Naive thymus-derived CD4-positive, alpha-beta T cell (primary cell): ENCODE measurements at regions of chr22 and their contacts with region 1.

Region 1: DNA sequence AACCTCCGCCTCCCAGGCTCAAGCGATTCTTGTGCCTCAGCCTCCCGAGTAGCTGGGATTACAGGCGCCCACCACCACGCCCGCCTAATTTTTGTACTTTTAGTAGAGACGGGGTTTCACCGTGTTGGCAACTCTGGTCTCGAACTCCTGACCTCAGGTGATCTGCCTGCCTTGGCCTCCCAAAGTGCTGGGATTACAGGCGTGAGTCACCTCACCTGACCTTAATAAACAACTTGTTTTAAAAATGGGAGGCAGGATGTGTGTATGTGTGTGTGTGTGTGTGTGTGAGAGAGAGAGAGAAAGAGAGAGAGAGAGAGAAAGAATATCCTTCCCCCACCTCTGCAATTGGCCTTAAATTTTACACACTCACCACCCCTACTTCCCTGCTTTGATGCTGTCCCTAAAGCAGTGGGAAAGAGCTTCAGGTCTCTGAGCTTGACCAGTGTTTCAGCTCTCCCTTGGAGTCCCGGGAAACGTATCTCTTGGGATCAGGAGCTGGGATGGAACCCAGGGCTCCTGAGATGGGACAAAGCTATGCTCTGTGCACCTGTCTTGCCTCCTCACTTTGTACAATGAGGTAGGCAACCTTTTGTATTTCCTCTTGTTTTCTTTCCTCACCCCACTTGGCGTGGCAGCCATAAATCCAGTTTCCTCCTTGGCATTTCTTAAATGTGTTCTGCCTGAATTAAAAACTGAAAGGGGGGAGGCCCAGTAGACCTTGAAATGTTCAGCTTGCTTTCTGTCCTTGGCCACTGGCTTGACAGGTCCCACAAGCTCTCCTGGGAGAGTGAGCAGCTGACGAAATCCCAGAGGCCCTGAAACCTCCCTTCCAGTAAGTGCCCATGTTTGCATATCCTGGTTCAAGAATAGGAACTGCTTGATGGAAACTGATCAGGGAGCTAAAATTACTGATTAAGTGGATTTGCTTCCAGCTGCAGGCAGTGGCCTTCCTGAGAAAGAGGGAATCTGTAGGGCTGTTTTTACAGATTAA is 17.8 kb upstream of the XBP1 start:
- DNase-seq: peak in 1 of 9 donors; percentile 22
- ATAC-seq: no peak
- H3K4me3 ChIP-seq: no peak overlapping the region
- H3K4me3 Mint-ChIP-seq: peak overlapping the region in 9 of 10 donors; percentile 25 to 76 (median 63)
- H3K27ac ChIP-seq: no peak overlapping the region
- H3K27ac Mint-ChIP-seq: peak overlapping the region; percentile 32 to 92 (median 75)
- H3K4me1 ChIP-seq: peaks cover 24 to 62% of the 10 kb centered on the region in 2 donors
- H3K4me1 Mint-ChIP-seq: peaks cover 59 to 92% (median 82%) of the 10 kb centered on the region in 7 donors
- H3K27me3 ChIP-seq: no peaks in the 10 kb centered on the region
- H3K27me3 Mint-ChIP-seq: no peaks in the 10 kb centered on the region

Region 2: GRCh38 chr22:28344918-28345703 is 473.1 kb before region 1 on chr22:
- CTCF ChIA-PET with region 1: no interaction called
- POLR2A ChIA-PET with region 1: no interaction called
- intact Hi-C with region 1: no loop called
- DNase-seq: no peak
- ATAC-seq: no peak
- H3K4me3 ChIP-seq: no peak overlapping the region
- H3K4me3 Mint-ChIP-seq: no peak overlapping the region
- H3K27ac ChIP-seq: no peak overlapping the region
- H3K27ac Mint-ChIP-seq: no peak overlapping the region
- H3K4me1 ChIP-seq: no peaks in the 10 kb centered on the region
- H3K4me1 Mint-ChIP-seq: peaks cover 0 to 10% (median 4%) of the 10 kb centered on the region in 7 donors
- H3K27me3 ChIP-seq: no peaks in the 10 kb centered on the region
- H3K27me3 Mint-ChIP-seq: peaks cover 0 to 13% (median 3%) of the 10 kb centered on the region in 5 donors

Region 3: GRCh38 chr22:28791841-28792490 is 26.2 kb before region 1 on chr22:
- CTCF ChIA-PET with region 1: interaction called, 9 read pairs
- POLR2A ChIA-PET with region 1: interaction called, 194 read pairs
- intact Hi-C with region 1: no loop called
- DNase-seq: no peak
- ATAC-seq: peak; percentile 23
- H3K4me3 ChIP-seq: no peak overlapping the region
- H3K4me3 Mint-ChIP-seq: peak overlapping the region in 5 of 10 donors; percentile 10 to 40 (median 34)
- H3K27ac ChIP-seq: no peak overlapping the region
- H3K27ac Mint-ChIP-seq: peak overlapping the region; percentile 12 to 97 (median 63)
- H3K4me1 ChIP-seq: peaks cover 22 to 34% of the 10 kb centered on the region in 2 donors
- H3K4me1 Mint-ChIP-seq: peaks cover 38 to 74% (median 66%) of the 10 kb centered on the region in 7 donors
- H3K27me3 ChIP-seq: no peaks in the 10 kb centered on the region
- H3K27me3 Mint-ChIP-seq: no peaks in the 10 kb centered on the region

Region 4: DNA sequence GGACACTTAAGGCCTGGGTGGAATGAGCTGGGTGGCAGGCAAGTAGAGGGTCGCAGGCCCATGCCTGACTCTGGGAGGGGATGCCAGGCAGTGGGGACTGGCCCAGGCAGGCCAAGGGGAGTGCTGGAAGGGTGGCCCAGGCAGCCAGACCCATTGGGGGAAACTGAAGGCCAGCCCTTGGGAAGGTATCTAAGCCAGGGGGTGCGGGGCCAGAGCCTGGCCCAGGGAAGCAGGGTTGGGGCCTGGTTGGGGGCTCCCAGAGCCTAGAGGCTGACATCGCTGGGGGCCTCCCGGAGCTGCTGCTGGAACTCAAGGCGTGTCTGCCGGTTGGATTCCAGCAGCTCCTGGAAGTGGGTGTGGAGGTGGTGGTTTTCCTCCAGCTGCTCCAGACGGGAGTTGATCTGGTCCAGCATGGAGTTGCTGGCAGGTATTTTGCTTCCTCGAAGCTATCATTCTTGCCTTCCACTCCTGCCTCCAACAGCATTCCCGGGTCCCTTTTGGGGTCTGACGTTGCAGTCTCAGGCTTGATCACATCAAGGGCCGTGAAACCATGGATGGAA is 17.5 kb after region 1 on chr22:
- CTCF ChIA-PET with region 1: no interaction called
- POLR2A ChIA-PET with region 1: no interaction called
- intact Hi-C with region 1: no loop called
- DNase-seq: no peak
- ATAC-seq: no peak
- H3K4me3 ChIP-seq: no peak overlapping the region
- H3K4me3 Mint-ChIP-seq: no peak overlapping the region
- H3K27ac ChIP-seq: no peak overlapping the region
- H3K27ac Mint-ChIP-seq: no peak overlapping the region
- H3K4me1 ChIP-seq: no peaks in the 10 kb centered on the region
- H3K4me1 Mint-ChIP-seq: peaks cover 0 to 14% (median 5%) of the 10 kb centered on the region in 7 donors
- H3K27me3 ChIP-seq: no peaks in the 10 kb centered on the region
- H3K27me3 Mint-ChIP-seq: no peaks in the 10 kb centered on the region

Region 5: GRCh38 chr22:28969401-28970168 is 151.4 kb after region 1 on chr22:
- CTCF ChIA-PET with region 1: no interaction called
- POLR2A ChIA-PET with region 1: no interaction called
- intact Hi-C with region 1: no loop called
- DNase-seq: no peak
- ATAC-seq: no peak
- H3K4me3 ChIP-seq: no peak overlapping the region
- H3K4me3 Mint-ChIP-seq: no peak overlapping the region
- H3K27ac ChIP-seq: no peak overlapping the region
- H3K27ac Mint-ChIP-seq: no peak overlapping the region
- H3K4me1 ChIP-seq: no peaks in the 10 kb centered on the region
- H3K4me1 Mint-ChIP-seq: peaks cover 0 to 3% (median 0%) of the 10 kb centered on the region in 7 donors
- H3K27me3 ChIP-seq: no peaks in the 10 kb centered on the region
- H3K27me3 Mint-ChIP-seq: peaks cover 30 to 65% (median 37%) of the 10 kb centered on the region in 5 donors